ENCODE measurements at regions of chr6 and their contacts with region 1.

Region 1: GRCh38 chr6:136816656-136817055 is 5.7 kb upstream of the PEX7 start:
- DNase-seq: no peak
- ATAC-seq: no peak
- H3K4me3 ChIP-seq: no peak overlapping the region
- H3K4me3 Mint-ChIP-seq: no peak overlapping the region
- H3K27ac ChIP-seq: no peak overlapping the region
- H3K27ac Mint-ChIP-seq: no peak overlapping the region
- H3K4me1 ChIP-seq: peaks cover 3% of the 10 kb centered on the region
- H3K4me1 Mint-ChIP-seq: peaks cover 4% of the 10 kb centered on the region
- H3K27me3 ChIP-seq: no peaks in the 10 kb centered on the region
- H3K27me3 Mint-ChIP-seq: peaks cover 3% of the 10 kb centered on the region
- CTCF ChIP-seq: no peak

Region 2: DNA sequence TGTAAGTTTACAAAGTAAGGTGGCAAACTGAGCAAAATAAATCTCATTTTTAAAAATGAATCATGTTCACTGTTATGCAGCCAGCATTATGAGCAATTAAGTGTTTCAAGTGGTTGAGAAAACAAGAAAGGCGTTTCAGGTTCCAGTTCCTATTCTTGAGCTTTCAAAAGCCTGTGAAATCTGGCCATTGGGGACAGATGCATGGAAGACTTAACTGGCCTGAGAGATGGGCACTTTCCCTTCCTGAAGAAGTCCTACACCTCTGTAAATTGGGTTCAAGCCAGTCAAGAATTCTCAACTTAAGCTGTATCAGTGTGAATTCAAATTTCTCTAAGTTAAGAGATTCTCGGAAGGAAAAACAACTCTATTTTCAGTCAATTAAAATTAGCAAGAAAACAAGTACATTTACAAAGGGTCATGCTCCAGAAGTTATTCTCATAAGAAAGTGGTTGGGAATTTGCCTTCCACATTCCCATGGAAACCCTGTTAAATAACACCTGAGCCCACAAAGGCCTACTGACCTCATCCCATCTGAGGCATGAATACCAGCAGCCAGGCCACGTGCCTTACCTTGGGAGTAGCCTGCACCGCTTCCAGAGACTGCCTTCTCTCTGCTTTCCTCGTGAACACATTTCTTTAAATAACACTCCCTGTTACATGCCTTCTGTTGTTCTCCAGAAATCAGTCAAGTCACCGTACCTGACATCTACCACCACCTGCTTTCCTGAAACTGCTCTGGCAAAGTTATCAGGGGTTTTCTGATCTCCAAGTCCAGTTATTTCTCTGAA is 43.8 kb before region 1 on chr6:
- CTCF ChIA-PET with region 1: no interaction called
- POLR2A ChIA-PET with region 1: no interaction called
- intact Hi-C with region 1: no loop called
- DNase-seq: no peak
- ATAC-seq: no peak
- H3K4me3 ChIP-seq: no peak overlapping the region
- H3K4me3 Mint-ChIP-seq: no peak overlapping the region
- H3K27ac ChIP-seq: no peak overlapping the region
- H3K27ac Mint-ChIP-seq: peak overlapping the region; percentile 75
- H3K4me1 ChIP-seq: peaks cover 2% of the 10 kb centered on the region
- H3K4me1 Mint-ChIP-seq: peaks cover 60% of the 10 kb centered on the region
- H3K27me3 ChIP-seq: no peaks in the 10 kb centered on the region
- H3K27me3 Mint-ChIP-seq: no peaks in the 10 kb centered on the region
- CTCF ChIP-seq: no peak

Region 3: DNA sequence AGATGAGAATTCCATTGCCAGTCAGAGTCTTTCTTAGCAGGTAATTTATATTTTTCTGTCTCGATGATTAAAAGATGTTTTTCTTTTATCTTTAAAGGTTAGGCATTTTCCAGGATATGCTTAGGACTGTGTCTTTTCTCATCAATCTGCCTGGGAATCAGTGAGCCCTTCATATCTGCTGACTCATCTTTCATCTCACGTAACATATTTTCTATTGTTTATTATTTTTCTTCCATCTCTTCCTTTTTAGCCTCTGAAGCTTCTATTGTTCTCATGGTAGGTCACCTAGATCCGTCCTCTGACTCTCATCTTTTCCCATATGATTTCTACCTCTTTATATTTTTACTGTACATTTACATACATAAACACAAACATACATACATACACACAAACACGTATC is 1965.6 kb after region 1 on chr6:
- CTCF ChIA-PET with region 1: no interaction called
- POLR2A ChIA-PET with region 1: no interaction called
- intact Hi-C with region 1: loop called in 1 of 2 experiments (anchors 5 kb)
- DNase-seq: no peak
- ATAC-seq: no peak
- H3K4me3 ChIP-seq: no peak overlapping the region
- H3K4me3 Mint-ChIP-seq: no peak overlapping the region
- H3K27ac ChIP-seq: no peak overlapping the region
- H3K27ac Mint-ChIP-seq: no peak overlapping the region
- H3K4me1 ChIP-seq: peaks cover 4% of the 10 kb centered on the region
- H3K4me1 Mint-ChIP-seq: peaks cover 18% of the 10 kb centered on the region
- H3K27me3 ChIP-seq: no peaks in the 10 kb centered on the region
- H3K27me3 Mint-ChIP-seq: no peaks in the 10 kb centered on the region
- CTCF ChIP-seq: no peak